Ascending aorta (tissue), 2 donors: ENCODE measurements at regions of chr20 and their contacts with region 1.

Region 1: DNA sequence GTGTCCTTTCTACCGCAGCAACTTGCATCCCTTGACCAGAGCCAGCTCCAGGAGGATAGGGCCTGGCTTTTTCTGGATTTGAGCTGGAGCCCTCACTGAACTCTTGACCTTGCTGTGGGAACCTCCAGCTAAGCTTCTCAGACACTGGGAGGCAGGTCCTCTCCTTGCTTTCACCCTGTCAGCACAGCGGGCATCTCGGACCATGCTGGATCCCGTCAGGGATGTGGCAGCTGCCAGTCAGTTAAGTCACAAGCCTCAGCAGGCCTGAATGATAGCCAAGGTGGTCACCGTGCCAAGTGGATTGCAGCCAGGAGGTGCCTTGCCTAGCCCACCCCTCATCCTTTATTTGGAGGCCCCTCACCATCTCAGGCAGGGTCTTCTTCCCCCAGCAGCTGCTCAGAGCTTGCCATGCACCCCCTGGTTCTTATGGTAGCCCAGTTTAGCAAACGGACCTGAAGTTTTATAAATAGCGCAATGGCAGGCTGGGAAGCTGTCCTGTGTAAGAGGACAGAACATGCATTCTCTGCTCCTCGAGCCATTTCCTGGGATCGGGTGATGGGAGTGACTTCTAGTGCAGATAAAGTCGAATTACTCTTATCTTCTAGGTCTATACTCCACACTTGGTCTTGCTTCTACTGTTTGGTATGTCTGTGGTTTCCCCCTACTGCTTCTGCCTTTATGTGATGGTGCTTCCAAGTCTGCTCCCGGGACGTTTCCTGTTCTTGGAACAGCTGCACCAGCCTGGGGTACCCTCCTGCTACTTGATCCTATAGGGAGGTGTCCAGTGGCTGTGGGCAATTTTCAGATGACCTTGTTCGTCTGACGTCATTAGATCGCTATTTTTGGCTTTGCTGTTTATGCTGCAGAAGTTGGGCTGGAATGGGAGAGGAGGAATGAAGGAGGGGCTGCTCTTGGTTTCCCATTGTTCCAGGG is 7.1 kb upstream of the MYLK2 start:
- DNase-seq: no peak
- H3K4me3 ChIP-seq: no peak overlapping the region
- H3K27ac ChIP-seq: peak overlapping the region; percentile 88 to 91
- H3K4me1 ChIP-seq: peaks cover 36 to 79% of the 10 kb centered on the region in 2 donors
- H3K27me3 ChIP-seq: no peaks in the 10 kb centered on the region
- CTCF ChIP-seq: no peak

Region 2: DNA sequence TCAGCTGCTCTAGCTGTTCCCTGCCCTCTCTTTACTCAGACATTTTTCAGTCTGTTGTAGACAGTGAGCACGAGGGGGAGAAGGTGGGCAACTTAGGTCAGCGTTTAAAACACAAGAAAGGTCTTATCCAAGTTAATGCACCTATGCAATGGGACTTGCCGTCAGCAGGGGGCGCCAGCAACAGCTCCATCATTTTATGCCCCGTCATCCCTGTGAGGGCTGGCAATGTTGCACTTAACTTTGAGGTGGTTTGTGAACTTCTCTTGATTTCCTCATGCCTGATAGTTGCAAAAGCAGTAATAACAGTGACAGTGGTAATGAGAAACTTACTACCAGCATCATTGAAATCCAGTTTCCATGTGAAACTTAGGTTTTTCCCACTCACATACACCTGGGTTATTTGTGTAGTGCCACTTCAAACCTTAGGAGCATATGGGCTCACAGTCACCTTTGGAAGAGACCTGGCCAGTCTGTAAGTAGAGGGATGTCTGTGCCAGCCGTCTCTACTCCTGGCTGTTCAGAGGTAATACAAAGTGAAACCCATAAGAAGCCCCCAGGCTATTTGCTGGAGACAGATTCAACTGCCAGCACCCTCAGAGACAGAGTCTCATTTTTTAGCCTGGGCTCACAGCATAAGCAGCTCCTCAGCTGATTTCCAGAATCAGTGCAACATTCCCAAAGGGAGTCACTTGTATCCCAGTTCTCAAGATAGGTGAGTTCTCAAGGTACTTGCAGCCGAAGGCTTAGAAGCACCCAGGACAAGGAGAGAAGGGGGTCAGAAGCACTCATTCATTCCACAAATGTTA is 251.8 kb before region 1 on chr20:
- intact Hi-C with region 1: loop called (anchors 5 kb)
- DNase-seq: peak; percentile 35 to 89
- H3K4me3 ChIP-seq: no peak overlapping the region
- H3K27ac ChIP-seq: peak overlapping the region; percentile 78 to 92
- H3K4me1 ChIP-seq: peaks cover 10 to 23% of the 10 kb centered on the region in 2 donors
- H3K27me3 ChIP-seq: no peaks in the 10 kb centered on the region
- CTCF ChIP-seq: peak; percentile 83 to 84 (median 83)

Region 3: GRCh38 chr20:31661625-31662371 is 150.3 kb before region 1 on chr20:
- intact Hi-C with region 1: loop called (anchors 5 kb)
- DNase-seq: peak in 1 of 2 donors; percentile 88
- H3K4me3 ChIP-seq: peak overlapping the region; percentile 42 to 62
- H3K27ac ChIP-seq: peak overlapping the region; percentile 68 to 83
- H3K4me1 ChIP-seq: peaks cover 9 to 33% of the 10 kb centered on the region in 2 donors
- H3K27me3 ChIP-seq: no peaks in the 10 kb centered on the region
- CTCF ChIP-seq: peak; percentile 80 to 82 (median 82)